Naive thymus-derived CD4-positive, alpha-beta T cell (primary cell): ENCODE measurements at regions of chr19 and their contacts with region 1.

Region 1: GRCh38 chr19:45994989-45995714 is at the start of gene CCDC61:
- DNase-seq: peak; percentile 82 to 100 (median 99)
- ATAC-seq: peak; percentile 97
- H3K4me3 ChIP-seq: peak within 1 kb of the TSS; percentile 73
- H3K4me3 Mint-ChIP-seq: peak within 1 kb of the TSS in 3 of 10 donors; percentile 9 to 64 (median 34)
- H3K27ac ChIP-seq: peak within 1 kb of the TSS; percentile 84
- H3K27ac Mint-ChIP-seq: peak within 1 kb of the TSS in 1 of 9 donors; percentile 72
- H3K4me1 ChIP-seq: peaks cover 5% of the 10 kb centered on the region in 2 donors
- H3K4me1 Mint-ChIP-seq: peaks cover 12 to 25% (median 18%) of the 10 kb centered on the region in 7 donors
- H3K27me3 ChIP-seq: no peaks in the 10 kb centered on the region
- H3K27me3 Mint-ChIP-seq: peaks cover 0 to 13% (median 5%) of the 10 kb centered on the region in 5 donors
- total RNA-seq, gene CCDC61: 15.5 to 35.8 (median 25.3) TPM

Region 2: DNA sequence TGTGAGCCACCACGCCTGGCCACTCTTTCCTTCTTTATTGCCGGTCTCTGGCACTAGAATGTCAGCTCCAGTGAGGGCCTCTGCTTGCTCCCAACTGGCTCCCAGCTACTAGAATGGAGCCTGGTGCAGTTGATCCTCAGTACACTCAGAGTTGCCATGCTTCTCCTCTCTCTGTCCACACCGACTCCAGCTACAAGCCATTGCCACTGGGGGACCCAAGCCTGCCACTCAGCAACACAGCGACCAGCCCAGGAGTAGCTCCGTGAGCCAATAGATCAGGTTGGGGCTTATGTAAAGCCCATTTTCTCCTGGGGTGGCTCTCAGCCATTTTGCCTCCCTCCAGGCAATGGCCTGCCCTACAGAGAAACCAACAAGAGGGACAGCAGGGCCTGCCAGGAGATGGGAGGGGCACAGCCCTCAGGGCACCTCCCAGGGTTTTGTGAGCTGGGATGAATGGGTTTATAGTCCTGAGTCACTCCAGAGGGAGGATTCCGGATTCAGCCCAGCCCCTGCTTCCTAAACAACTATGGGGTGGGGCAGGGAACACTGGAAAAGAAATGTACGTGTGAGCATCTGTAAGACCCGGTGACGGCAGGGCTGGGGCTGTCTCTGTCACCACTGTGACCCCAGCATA is 447.1 kb before region 1 on chr19:
- CTCF ChIA-PET with region 1: no interaction called
- POLR2A ChIA-PET with region 1: no interaction called
- intact Hi-C with region 1: no loop called
- DNase-seq: no peak
- ATAC-seq: no peak
- H3K4me3 ChIP-seq: no peak overlapping the region
- H3K4me3 Mint-ChIP-seq: no peak overlapping the region
- H3K27ac ChIP-seq: no peak overlapping the region
- H3K27ac Mint-ChIP-seq: peak overlapping the region in 1 of 9 donors; percentile 23
- H3K4me1 ChIP-seq: no peaks in the 10 kb centered on the region
- H3K4me1 Mint-ChIP-seq: peaks cover 0 to 6% (median 0%) of the 10 kb centered on the region in 7 donors
- H3K27me3 ChIP-seq: no peaks in the 10 kb centered on the region
- H3K27me3 Mint-ChIP-seq: no peaks in the 10 kb centered on the region

Region 3: DNA sequence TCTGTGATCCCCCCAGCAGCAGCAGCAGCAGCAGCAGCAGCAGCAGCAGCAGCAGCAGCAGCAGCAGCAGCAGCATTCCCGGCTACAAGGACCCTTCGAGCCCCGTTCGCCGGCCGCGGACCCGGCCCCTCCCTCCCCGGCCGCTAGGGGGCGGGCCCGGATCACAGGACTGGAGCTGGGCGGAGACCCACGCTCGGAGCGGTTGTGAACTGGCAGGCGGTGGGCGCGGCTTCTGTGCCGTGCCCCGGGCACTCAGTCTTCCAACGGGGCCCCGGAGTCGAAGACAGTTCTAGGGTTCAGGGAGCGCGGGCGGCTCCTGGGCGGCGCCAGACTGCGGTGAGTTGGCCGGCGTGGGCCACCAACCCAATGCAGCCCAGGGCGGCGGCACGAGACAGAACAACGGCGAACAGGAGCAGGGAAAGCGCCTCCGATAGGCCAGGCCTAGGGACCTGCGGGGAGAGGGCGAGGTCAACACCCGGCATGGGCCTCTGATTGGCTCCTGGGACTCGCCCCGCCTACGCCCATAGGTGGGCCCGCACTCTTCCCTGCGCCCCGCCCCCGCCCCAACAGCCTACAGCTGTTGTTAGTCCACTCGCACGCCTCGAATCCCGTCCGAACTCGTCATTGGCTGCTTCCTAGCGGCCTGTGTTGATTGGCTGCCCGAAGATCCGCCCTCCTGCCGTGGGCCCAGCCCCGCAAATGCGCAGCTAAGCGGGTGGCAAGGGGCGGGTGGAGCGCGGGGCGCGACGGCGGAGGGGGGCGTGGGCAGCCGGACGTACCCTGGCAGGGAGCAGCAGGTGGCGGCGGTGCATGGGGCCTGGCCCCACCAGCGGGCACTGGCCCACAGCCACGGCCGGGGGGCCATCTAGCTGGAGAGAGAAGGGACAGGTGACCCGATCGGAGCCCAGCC is 224.7 kb before region 1 on chr19:
- CTCF ChIA-PET with region 1: no interaction called
- POLR2A ChIA-PET with region 1: no interaction called
- intact Hi-C with region 1: loop called (anchors 1 to 10 kb)
- DNase-seq: peak; percentile 84 to 97 (median 93)
- ATAC-seq: peak; percentile 85
- H3K4me3 ChIP-seq: peak overlapping the region; percentile 95
- H3K4me3 Mint-ChIP-seq: peak overlapping the region; percentile 81 to 92 (median 88)
- H3K27ac ChIP-seq: peak overlapping the region; percentile 64
- H3K27ac Mint-ChIP-seq: peak overlapping the region in 7 of 9 donors; percentile 43 to 93 (median 85)
- H3K4me1 ChIP-seq: peaks cover 9 to 13% of the 10 kb centered on the region in 2 donors
- H3K4me1 Mint-ChIP-seq: peaks cover 0 to 16% (median 8%) of the 10 kb centered on the region in 7 donors
- H3K27me3 ChIP-seq: no peaks in the 10 kb centered on the region
- H3K27me3 Mint-ChIP-seq: peaks cover 0 to 28% (median 4%) of the 10 kb centered on the region in 5 donors

Region 4: DNA sequence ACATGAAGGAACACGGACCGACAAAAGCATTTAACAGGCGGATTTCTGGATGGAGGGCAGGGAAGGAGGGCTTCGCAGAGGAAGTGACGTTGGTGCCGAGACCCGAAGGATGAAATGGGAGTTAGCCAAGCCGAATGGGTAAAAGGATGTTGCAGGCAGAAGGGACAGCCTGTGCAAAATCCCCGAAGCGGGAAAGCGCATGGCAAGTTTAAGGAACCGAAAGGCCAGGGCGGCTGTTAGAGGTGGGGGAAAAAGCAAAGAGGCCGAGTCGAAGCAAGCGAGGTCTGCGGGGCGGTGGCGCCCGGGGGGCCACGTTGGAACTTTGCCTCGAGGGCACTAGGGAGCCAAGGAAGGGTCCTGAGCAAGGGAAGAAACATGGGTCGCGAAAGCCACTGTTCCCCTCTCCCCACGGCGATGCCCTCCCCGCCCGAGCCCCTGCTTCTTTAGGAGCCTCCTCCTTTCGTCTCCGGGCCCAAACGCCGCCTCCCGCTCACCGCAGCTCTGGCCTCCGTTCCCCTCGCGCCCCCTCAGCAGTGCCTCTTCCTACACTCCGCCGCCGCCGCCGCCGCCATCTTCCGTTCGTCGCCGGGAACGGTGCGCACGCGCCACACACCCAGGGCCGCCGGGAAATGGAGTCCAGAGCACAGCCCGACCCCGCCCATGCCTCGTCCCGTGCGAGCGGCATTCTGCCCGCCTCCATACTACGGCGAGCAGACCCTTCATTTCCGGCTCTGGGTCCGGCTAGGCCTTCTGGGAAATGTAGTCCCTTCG is 132.4 kb before region 1 on chr19 and contains the start of gene SYMPK:
- CTCF ChIA-PET with region 1: interaction called, 5 read pairs
- POLR2A ChIA-PET with region 1: no interaction called
- intact Hi-C with region 1: loop called (anchors 1 kb)
- DNase-seq: peak; percentile 93 to 99 (median 99)
- ATAC-seq: peak; percentile 99
- H3K4me3 ChIP-seq: peak within 1 kb of the TSS; percentile 95
- H3K4me3 Mint-ChIP-seq: peak within 1 kb of the TSS; percentile 90 to 100 (median 96)
- H3K27ac ChIP-seq: peak within 1 kb of the TSS; percentile 86
- H3K27ac Mint-ChIP-seq: peak within 1 kb of the TSS; percentile 84 to 99 (median 95)
- H3K4me1 ChIP-seq: peaks cover 12 to 15% of the 10 kb centered on the region in 2 donors
- H3K4me1 Mint-ChIP-seq: peaks cover 29 to 37% (median 36%) of the 10 kb centered on the region in 7 donors
- H3K27me3 ChIP-seq: peaks cover 0 to 4% of the 10 kb centered on the region in 2 donors
- H3K27me3 Mint-ChIP-seq: peaks cover 6 to 39% (median 21%) of the 10 kb centered on the region in 5 donors
- total RNA-seq, gene SYMPK: 81.3 to 110 (median 96.4) TPM

Region 5: DNA sequence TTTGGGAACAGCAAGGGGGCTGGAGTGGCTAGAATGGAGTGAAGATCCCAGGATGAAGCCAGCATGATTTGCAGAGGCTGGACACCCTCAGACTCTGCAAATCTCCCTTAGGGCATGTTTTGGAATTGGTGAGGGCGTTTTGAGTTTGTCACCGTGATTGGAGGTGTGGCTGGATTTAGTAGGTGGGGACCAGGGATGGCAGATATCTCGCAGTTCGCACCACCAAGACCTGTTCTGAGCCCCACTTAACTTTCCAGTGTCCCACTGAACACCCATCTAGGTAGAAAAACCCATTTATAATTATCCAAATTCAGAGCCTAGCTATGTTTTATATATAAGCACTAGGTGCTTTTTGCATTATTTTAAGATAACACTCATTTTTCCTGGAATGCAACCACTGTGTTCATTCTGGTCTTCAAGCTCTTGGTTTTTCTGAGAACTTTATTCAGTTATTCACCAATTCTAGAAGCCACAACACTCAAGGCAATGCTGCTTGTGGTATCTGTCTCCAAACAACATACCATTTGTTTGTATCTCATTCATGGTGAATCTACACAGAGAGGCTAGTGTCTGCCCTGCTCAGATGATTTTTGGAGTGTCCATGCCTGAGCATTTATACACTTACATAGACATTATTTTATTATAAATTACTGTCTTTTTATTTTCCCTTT is 77.6 kb before region 1 on chr19:
- CTCF ChIA-PET with region 1: no interaction called
- POLR2A ChIA-PET with region 1: no interaction called
- intact Hi-C with region 1: loop called in 1 of 2 experiments (anchors 1 kb)
- DNase-seq: no peak
- ATAC-seq: no peak
- H3K4me3 ChIP-seq: no peak overlapping the region
- H3K4me3 Mint-ChIP-seq: peak overlapping the region in 1 of 10 donors; percentile 67
- H3K27ac ChIP-seq: no peak overlapping the region
- H3K27ac Mint-ChIP-seq: peak overlapping the region in 1 of 9 donors; percentile 92
- H3K4me1 ChIP-seq: no peaks in the 10 kb centered on the region
- H3K4me1 Mint-ChIP-seq: peaks cover 0 to 42% (median 0%) of the 10 kb centered on the region in 7 donors
- H3K27me3 ChIP-seq: no peaks in the 10 kb centered on the region
- H3K27me3 Mint-ChIP-seq: peaks cover 5 to 21% (median 17%) of the 10 kb centered on the region in 5 donors

Region 6: DNA sequence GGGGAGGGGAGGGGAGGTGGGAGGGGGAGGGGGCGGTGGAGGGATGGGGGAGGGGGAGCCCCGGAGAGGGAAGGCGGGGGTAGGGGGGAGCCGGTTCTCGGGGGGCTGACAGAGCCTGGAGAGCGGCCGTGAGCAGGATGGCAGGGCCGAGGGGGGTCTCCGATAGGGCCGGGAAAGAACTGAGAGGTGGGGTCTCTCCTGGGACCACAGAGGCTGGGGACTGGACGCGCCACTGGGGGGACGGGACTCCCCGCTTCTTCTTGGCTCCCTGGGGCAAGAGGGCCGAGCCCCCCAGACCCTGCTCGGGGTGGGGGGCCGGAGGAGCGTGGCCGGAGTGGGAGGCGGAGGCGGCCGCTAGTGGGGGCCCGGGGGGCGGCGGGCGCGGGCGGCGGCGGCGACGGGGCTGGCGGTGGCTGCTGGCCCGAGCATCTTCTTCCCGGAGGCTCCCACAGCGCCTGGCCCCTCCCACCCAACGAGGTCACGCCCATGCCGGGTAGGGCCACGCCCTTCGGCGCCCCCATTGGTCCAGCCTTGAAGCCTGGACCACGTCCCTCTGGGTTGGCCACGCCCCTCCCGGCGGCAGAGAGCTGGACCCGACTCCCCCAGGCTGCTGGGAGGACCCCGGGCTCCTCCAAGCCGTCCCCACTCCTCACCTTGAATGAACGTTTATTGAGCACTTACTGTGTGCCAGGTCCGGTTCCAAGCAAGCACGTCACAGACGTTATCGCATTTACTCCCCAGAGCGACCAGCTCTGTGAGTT is 21.4 kb before region 1 on chr19 and contains the start of gene NOVA2:
- CTCF ChIA-PET with region 1: no interaction called
- POLR2A ChIA-PET with region 1: interaction called, 3 read pairs
- intact Hi-C with region 1: loop called in 1 of 2 experiments (anchors 2 kb)
- DNase-seq: peak in 1 of 9 donors; percentile 62
- ATAC-seq: peak; percentile 28
- H3K4me3 ChIP-seq: no peak within 1 kb of the TSS
- H3K4me3 Mint-ChIP-seq: peak within 1 kb of the TSS in 9 of 10 donors; percentile 42 to 80 (median 62)
- H3K27ac ChIP-seq: no peak within 1 kb of the TSS
- H3K27ac Mint-ChIP-seq: peak within 1 kb of the TSS in 1 of 9 donors; percentile 89
- H3K4me1 ChIP-seq: peaks cover 11 to 12% of the 10 kb centered on the region in 2 donors
- H3K4me1 Mint-ChIP-seq: peaks cover 18 to 26% (median 21%) of the 10 kb centered on the region in 7 donors
- H3K27me3 ChIP-seq: peaks cover 0 to 11% of the 10 kb centered on the region in 2 donors
- H3K27me3 Mint-ChIP-seq: peaks cover 66 to 81% (median 77%) of the 10 kb centered on the region in 5 donors
- total RNA-seq, gene NOVA2: 0.19 TPM in 1 of 5 experiments, not detected in the others

Region 7: GRCh38 chr19:46016426-46017094 is 21.4 kb after region 1 on chr19:
- CTCF ChIA-PET with region 1: no interaction called
- POLR2A ChIA-PET with region 1: interaction called, 3 read pairs
- intact Hi-C with region 1: loop called (anchors 1 to 2 kb)
- DNase-seq: peak; percentile 57 to 84 (median 75)
- ATAC-seq: peak; percentile 92
- H3K4me3 ChIP-seq: peak overlapping the region; percentile 62
- H3K4me3 Mint-ChIP-seq: peak overlapping the region; percentile 85 to 97 (median 92)
- H3K27ac ChIP-seq: peak overlapping the region; percentile 55
- H3K27ac Mint-ChIP-seq: peak overlapping the region in 7 of 9 donors; percentile 28 to 82 (median 50)
- H3K4me1 ChIP-seq: peaks cover 0 to 7% of the 10 kb centered on the region in 2 donors
- H3K4me1 Mint-ChIP-seq: peaks cover 11 to 23% (median 18%) of the 10 kb centered on the region in 7 donors
- H3K27me3 ChIP-seq: peaks cover 0 to 6% of the 10 kb centered on the region in 2 donors
- H3K27me3 Mint-ChIP-seq: peaks cover 5 to 17% (median 12%) of the 10 kb centered on the region in 5 donors

Region 8: DNA sequence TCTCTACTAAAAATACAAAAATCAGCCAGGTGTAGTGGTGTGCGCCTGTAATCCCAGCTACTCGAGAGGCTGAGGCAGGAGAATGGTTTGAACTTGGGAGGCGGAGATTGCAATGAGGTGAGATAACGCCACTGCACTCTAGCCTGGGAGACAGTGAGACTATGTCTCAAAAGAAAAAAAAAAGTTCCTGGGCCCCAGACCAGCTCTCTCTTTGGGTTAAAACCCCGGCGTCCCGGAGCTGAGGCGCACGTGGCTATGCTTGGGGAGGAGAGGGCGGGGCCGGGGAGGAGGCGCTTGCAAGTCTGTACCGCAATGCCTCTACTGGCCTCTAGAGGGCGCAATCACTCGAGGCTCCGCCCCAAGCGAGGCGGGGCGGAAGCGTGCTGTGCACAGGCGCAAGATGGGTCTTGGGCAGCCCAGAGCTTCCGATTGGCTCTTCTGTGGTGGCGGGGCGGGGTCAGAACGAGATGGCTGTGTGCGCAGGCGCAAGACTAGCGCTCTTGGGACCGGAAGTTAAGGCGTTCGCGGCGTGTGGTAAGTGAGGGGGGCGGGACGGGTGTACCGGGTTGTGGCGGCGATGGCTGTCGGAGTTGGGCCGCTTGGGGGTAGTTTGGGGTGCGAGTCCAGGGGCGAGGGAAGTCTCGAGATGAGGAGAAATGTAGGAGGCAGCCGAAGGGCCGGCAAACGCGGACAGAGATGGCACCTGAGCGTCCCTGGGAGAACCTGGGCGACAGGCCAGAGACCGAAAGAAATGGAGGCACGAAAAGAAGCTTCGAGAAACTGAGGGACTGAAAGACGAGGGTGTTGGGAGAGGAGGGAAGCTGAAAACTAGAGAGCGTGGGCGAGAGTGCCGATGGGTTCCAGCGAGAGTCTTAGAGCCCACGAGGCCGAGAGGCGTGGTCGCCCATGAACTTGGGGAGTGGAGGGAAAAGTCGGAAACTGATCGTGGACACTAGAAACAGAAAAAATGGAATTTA is 1354.0 kb after region 1 on chr19 and contains the start of gene DHX34:
- CTCF ChIA-PET with region 1: no interaction called
- POLR2A ChIA-PET with region 1: no interaction called
- intact Hi-C with region 1: loop called in 1 of 2 experiments (anchors 10 kb)
- DNase-seq: peak; percentile 97 to 100 (median 99)
- ATAC-seq: peak; percentile 100
- H3K4me3 ChIP-seq: peak within 1 kb of the TSS; percentile 92
- H3K4me3 Mint-ChIP-seq: peak within 1 kb of the TSS; percentile 91 to 100 (median 97)
- H3K27ac ChIP-seq: peak within 1 kb of the TSS; percentile 83
- H3K27ac Mint-ChIP-seq: peak within 1 kb of the TSS; percentile 88 to 97 (median 95)
- H3K4me1 ChIP-seq: peaks cover 0 to 12% of the 10 kb centered on the region in 2 donors
- H3K4me1 Mint-ChIP-seq: peaks cover 19 to 46% (median 44%) of the 10 kb centered on the region in 7 donors
- H3K27me3 ChIP-seq: no peaks in the 10 kb centered on the region
- H3K27me3 Mint-ChIP-seq: peaks cover 0 to 3% (median 0%) of the 10 kb centered on the region in 5 donors
- total RNA-seq, gene DHX34: 15.6 to 31.6 (median 29.5) TPM